ENCODE measurements at regions of chr2 and their contacts with region 1.

Region 1: DNA sequence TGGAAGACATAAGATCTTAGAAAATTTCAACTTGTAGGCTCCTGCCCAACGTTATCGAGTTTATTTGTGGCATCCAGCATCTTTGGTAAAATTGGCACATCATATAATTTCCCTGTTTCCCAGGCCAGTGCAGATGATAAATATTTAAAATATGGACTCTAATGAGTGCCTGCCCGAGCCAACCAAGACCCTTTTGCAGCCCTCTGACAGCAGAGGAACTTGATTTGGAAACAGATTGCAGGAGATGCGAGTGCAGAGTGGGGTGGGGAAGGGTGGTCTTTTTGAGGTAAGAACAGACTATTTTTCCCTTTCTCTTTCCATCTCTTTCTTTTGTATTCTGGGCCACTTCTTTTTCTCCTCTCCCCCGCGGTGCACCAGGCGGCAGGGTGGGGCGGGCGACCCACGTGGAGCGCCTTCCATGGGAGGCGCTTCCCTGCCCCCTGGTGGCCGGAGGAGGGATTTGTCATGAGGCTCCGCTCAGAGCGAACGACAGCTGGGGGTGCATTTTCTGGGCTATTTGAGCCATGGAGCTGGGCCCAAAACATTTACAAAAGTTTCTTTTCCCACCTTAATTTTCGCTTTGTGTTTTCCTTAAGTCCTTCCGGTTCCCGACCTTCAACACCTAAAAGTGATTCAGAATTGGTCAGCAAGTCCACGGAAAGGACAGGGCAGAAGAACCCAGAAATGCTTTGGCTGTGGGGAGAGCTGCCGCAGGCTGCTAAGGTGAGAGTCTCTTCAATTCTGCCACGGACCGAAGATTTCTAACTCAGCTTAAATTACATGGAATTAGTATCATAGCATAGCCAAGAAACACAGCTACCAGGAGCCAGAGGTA is 32.7 kb downstream of the LPIN1 start:
- DNase-seq: peak; percentile 75 to 89 (median 79)
- ATAC-seq: peak; percentile 83 to 94 (median 92)
- H3K4me3 ChIP-seq: peak overlapping the region in 2 of 12 donors; percentile 20 to 31
- H3K27ac ChIP-seq: peak overlapping the region in 1 of 12 donors; percentile 4
- H3K4me1 ChIP-seq: peaks cover 0 to 36% (median 17%) of the 10 kb centered on the region in 12 donors
- H3K27me3 ChIP-seq: no peaks in the 10 kb centered on the region
- CTCF ChIP-seq: peak; percentile 95 to 99 (median 97)
- POLR2A ChIP-seq: no peak

Region 2: DNA sequence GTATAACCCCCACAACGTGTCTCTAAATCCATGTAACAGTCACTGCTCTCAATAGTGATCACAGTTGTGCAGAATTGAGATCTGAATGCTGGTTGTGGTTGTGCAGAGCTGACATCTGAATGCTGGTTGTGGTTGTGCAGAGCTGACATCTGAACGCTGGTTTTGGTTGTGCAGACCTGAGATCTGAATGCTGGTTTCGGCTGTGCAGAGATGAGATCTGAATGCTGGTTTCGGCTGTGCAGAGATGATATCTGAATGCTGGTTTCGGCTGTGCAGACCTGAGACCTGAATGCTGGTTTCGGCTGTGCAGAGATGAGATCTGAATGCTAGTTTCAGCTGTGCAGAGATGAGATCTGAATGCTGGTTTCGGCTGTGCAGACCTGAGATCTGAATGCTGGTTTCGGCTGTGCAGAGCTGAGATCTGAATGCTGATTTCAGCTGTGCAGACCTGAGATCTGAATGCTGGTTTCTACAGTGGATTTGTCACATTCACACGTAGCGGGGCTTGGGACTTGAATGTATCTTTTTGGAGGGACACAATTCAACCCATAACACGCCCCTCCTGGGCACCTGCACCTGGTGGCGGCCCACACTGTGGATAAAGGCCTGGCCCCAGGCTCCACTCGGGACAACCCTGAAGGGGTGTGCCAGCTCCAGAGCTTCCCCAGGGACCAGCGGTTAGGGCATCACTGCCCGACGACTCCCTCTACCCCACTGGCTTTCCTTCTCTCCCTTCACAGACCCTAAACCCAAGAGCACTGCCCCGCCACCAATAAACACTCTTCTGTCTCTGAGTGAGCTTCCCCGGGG is 675.0 kb before region 1 on chr2:
- intact Hi-C with region 1: no loop called
- DNase-seq: no peak
- ATAC-seq: no peak
- H3K4me3 ChIP-seq: no peak overlapping the region
- H3K27ac ChIP-seq: no peak overlapping the region
- H3K4me1 ChIP-seq: peaks cover 0 to 4% (median 0%) of the 10 kb centered on the region in 12 donors
- H3K27me3 ChIP-seq: peaks cover 0 to 10% (median 0%) of the 10 kb centered on the region in 9 donors
- CTCF ChIP-seq: no peak
- POLR2A ChIP-seq: no peak

Region 3: GRCh38 chr2:11477994-11478393 is 301.1 kb before region 1 on chr2:
- intact Hi-C with region 1: loop called in 7 of 10 experiments (anchors 2 to 10 kb)
- DNase-seq: peak; percentile 84 to 94 (median 86)
- ATAC-seq: peak; percentile 25 to 77 (median 62)
- H3K4me3 ChIP-seq: no peak overlapping the region
- H3K27ac ChIP-seq: no peak overlapping the region
- H3K4me1 ChIP-seq: peaks cover 0 to 10% (median 0%) of the 10 kb centered on the region in 12 donors
- H3K27me3 ChIP-seq: peaks cover 0 to 32% (median 0%) of the 10 kb centered on the region in 9 donors
- CTCF ChIP-seq: peak; percentile 80 to 97 (median 92)
- POLR2A ChIP-seq: no peak

Region 4: DNA sequence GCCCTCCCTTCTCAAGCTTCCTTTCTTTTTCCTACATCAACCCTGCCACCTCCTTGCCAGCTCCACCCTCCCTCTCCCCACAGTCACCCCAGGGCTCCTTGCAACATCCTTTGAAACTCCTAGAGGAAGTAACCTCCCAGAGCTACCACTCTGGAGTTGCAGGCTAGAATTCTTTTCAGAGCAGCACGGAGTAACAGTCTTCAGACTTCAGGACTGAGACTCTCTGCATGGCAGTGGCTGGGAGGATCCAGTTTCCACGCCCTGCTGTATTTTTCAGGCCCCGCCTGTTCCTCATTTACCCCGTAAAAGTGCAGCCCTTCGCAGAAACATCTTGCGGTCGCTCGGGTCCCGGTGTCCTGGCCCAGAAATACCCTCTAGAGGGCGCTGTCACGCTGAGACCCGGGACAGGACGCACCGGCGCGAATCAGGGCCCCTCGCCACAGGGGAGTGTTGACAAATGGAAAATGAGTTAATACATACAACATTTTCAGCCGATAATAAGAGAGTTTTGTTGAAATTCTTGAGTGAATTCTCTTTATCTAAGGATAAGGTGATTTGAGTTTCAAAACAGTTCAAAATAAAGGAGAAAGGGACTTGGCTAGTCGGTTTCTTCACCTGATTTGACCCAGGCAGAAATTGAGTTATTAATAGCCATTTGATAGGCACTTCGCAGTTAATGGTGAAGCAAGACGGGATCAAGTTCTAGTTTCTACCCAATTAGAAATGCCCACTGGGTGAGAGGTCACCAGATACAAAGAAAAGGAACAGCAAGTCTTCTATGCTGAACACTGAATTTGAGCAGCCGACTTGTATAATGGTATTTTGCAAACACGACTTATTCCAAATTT is 90.7 kb before region 1 on chr2:
- intact Hi-C with region 1: loop called in 9 of 10 experiments (anchors 1 to 5 kb)
- DNase-seq: peak; percentile 83 to 91 (median 86)
- ATAC-seq: peak; percentile 81 to 90 (median 88)
- H3K4me3 ChIP-seq: peak overlapping the region in 10 of 12 donors; percentile 3 to 41 (median 30)
- H3K27ac ChIP-seq: peak overlapping the region in 9 of 12 donors; percentile 2 to 77 (median 59)
- H3K4me1 ChIP-seq: peaks cover 0 to 36% (median 14%) of the 10 kb centered on the region in 12 donors
- H3K27me3 ChIP-seq: peaks cover 0 to 6% (median 0%) of the 10 kb centered on the region in 9 donors
- CTCF ChIP-seq: peak; percentile 78 to 97 (median 87)
- POLR2A ChIP-seq: no peak

Region 5: GRCh38 chr2:11697103-11697871 is 81.9 kb before region 1 on chr2:
- intact Hi-C with region 1: loop called in 9 of 10 experiments (anchors 1 to 5 kb)
- DNase-seq: peak in 4 of 5 donors; percentile 37 to 73 (median 60)
- ATAC-seq: peak; percentile 1 to 43 (median 23)
- H3K4me3 ChIP-seq: no peak overlapping the region
- H3K27ac ChIP-seq: peak overlapping the region in 11 of 12 donors; percentile 26 to 80 (median 70)
- H3K4me1 ChIP-seq: peaks cover 2 to 40% (median 18%) of the 10 kb centered on the region in 12 donors
- H3K27me3 ChIP-seq: no peaks in the 10 kb centered on the region
- CTCF ChIP-seq: no peak
- POLR2A ChIP-seq: no peak

Region 6: DNA sequence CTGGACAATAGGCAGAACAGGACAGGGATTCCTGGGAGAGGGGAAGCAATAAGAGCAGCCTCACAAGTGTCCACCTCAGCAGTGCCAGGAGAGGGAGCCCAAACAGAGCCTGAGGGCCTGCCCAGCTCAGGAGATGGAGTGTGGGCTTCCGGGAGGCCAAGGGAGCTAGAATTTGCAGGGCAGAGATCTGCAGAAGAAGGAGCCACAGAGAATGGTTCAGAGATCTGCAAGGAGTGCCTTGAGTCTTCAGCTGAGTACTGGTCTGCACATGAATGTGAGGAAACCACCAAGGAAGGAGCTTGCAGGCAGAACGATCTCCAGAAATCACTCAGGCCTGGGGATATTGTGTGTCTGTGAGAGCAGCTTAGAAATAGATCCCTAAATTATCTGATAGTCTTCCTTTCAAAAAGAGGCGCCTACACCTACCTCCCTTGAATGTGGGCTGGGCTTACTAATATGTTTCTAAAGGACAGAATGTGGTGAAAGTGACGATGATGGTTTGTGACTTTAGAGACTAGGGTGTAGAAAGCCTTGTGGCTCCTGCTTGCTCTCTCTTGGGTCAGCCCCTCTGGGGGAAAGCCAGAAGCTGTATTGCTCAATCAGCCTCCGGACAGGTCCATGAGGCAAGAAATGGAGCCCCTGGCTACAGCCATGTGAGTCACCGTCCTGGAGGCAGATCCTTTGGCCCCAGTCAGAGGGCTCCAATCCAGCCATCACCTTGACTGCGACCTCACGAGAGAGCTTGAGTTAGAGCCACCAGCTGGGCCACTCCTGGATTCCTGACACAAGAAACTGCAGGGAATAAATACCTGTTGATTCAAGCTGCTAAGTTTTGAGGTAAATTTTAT is 40.3 kb before region 1 on chr2:
- intact Hi-C with region 1: loop called (anchors 1 to 5 kb)
- DNase-seq: peak in 4 of 5 donors; percentile 45 to 89 (median 73)
- ATAC-seq: peak; percentile 87 to 92 (median 88)
- H3K4me3 ChIP-seq: no peak overlapping the region
- H3K27ac ChIP-seq: peak overlapping the region in 4 of 12 donors; percentile 17 to 61 (median 36)
- H3K4me1 ChIP-seq: peaks cover 0 to 16% (median 6%) of the 10 kb centered on the region in 12 donors
- H3K27me3 ChIP-seq: no peaks in the 10 kb centered on the region
- CTCF ChIP-seq: peak; percentile 23 to 64 (median 45)
- POLR2A ChIP-seq: no peak

Region 7: GRCh38 chr2:11743846-11744553 is 35.1 kb before region 1 on chr2:
- intact Hi-C with region 1: loop called in 9 of 10 experiments (anchors 2 to 5 kb)
- DNase-seq: peak; percentile 93 to 98 (median 94)
- ATAC-seq: peak; percentile 92 to 96 (median 93)
- H3K4me3 ChIP-seq: peak overlapping the region in 9 of 12 donors; percentile 1 to 44 (median 24)
- H3K27ac ChIP-seq: peak overlapping the region in 11 of 12 donors; percentile 11 to 84 (median 63)
- H3K4me1 ChIP-seq: peaks cover 9 to 53% (median 28%) of the 10 kb centered on the region in 12 donors
- H3K27me3 ChIP-seq: no peaks in the 10 kb centered on the region
- CTCF ChIP-seq: peak in 1 of 12 donors; percentile 5
- POLR2A ChIP-seq: peak in 1 of 2 donors; percentile 15

Region 8: GRCh38 chr2:11811036-11811654 is 32.0 kb after region 1 on chr2:
- intact Hi-C with region 1: no loop called
- DNase-seq: peak in 4 of 5 donors; percentile 39 to 47 (median 45)
- ATAC-seq: peak; percentile 39 to 69 (median 48)
- H3K4me3 ChIP-seq: no peak overlapping the region
- H3K27ac ChIP-seq: peak overlapping the region in 8 of 12 donors; percentile 19 to 77 (median 48)
- H3K4me1 ChIP-seq: peaks cover 0 to 25% (median 6%) of the 10 kb centered on the region in 12 donors
- H3K27me3 ChIP-seq: no peaks in the 10 kb centered on the region
- CTCF ChIP-seq: no peak
- POLR2A ChIP-seq: no peak